ENCODE measurements at regions of chr2 and their contacts with region 1.

Region 1: GRCh38 chr2:170361090-170361936 is 183.4 kb downstream of the MYO3B start:
- DNase-seq: peak; percentile 71
- H3K4me3 Mint-ChIP-seq: no peak overlapping the region
- H3K27ac Mint-ChIP-seq: no peak overlapping the region
- H3K4me1 Mint-ChIP-seq: peaks cover 31% of the 10 kb centered on the region
- H3K27me3 Mint-ChIP-seq: peaks cover 22% of the 10 kb centered on the region

Region 2: GRCh38 chr2:170324640-170325046 is 36.7 kb before region 1 on chr2:
- CTCF ChIA-PET with region 1: interaction called, 43 read pairs
- DNase-seq: peak; percentile 64
- H3K4me3 Mint-ChIP-seq: no peak overlapping the region
- H3K27ac Mint-ChIP-seq: no peak overlapping the region
- H3K4me1 Mint-ChIP-seq: no peaks in the 10 kb centered on the region
- H3K27me3 Mint-ChIP-seq: peaks cover 4% of the 10 kb centered on the region

Region 3: GRCh38 chr2:170341684-170342623 is 19.4 kb before region 1 on chr2:
- CTCF ChIA-PET with region 1: interaction called, 30 read pairs
- DNase-seq: no peak
- H3K4me3 Mint-ChIP-seq: no peak overlapping the region
- H3K27ac Mint-ChIP-seq: no peak overlapping the region
- H3K4me1 Mint-ChIP-seq: peaks cover 19% of the 10 kb centered on the region
- H3K27me3 Mint-ChIP-seq: peaks cover 15% of the 10 kb centered on the region

Region 4: DNA sequence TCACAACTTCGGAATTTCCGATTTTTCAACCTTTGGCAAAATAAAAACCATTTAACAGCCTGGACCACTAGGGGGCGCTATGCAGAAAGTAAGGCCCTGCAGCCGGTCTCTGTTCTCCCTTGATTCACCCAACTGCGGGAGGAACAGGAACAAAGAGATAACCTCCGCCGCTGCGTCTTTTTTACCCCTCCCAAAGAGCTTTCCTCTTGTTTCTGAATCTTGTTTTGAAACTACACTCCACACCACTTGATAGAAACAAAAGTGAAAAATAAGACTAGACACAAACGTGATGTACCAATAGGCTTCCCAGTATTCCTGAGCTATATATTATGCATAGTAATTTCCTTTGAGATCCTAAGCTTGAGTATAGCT is 47.8 kb after region 1 on chr2:
- CTCF ChIA-PET with region 1: interaction called, 13 read pairs
- DNase-seq: peak; percentile 83
- H3K4me3 Mint-ChIP-seq: no peak overlapping the region
- H3K27ac Mint-ChIP-seq: no peak overlapping the region
- H3K4me1 Mint-ChIP-seq: peaks cover 7% of the 10 kb centered on the region
- H3K27me3 Mint-ChIP-seq: peaks cover 41% of the 10 kb centered on the region

Region 5: GRCh38 chr2:170434900-170435621 is 73.7 kb after region 1 on chr2:
- CTCF ChIA-PET with region 1: no interaction called
- DNase-seq: no peak
- H3K4me3 Mint-ChIP-seq: no peak overlapping the region
- H3K27ac Mint-ChIP-seq: no peak overlapping the region
- H3K4me1 Mint-ChIP-seq: peaks cover 15% of the 10 kb centered on the region
- H3K27me3 Mint-ChIP-seq: peaks cover 25% of the 10 kb centered on the region

Measured in activated naive CD4-positive, alpha-beta T cell treated with anti-CD3 and anti-CD28 coated beads, Interleukin-2, amount 10 ng/mL, durations not matched to agents 7 days and 5 days (primary cell).